AG04450 (cell line): ENCODE measurements at regions of chr13 and their contacts with region 1.

Region 1: DNA sequence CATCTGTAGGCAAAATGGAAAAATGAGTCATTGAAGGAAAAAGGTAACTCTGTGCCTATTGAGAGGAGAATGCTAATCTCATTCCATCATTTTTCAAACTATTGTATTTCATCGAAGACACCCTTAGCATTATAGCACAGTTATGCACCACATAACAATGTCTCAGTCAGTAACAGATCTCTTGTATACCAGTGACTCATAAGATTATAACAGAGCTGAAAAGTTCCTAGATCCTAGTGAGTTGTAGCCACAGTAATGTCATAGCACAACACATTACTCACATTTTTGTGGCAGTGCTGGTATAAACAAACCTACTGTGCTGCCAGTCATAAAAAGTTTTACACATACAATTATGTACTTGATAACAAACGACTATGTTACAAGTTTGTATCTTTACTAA is 1077.6 kb downstream of the DIAPH3 start:
- DNase-seq: peak; percentile 27
- H3K4me3 ChIP-seq: no peak overlapping the region
- H3K27ac ChIP-seq: no peak overlapping the region
- H3K27me3 ChIP-seq: no peaks in the 10 kb centered on the region
- CTCF ChIP-seq: no peak

Region 2: DNA sequence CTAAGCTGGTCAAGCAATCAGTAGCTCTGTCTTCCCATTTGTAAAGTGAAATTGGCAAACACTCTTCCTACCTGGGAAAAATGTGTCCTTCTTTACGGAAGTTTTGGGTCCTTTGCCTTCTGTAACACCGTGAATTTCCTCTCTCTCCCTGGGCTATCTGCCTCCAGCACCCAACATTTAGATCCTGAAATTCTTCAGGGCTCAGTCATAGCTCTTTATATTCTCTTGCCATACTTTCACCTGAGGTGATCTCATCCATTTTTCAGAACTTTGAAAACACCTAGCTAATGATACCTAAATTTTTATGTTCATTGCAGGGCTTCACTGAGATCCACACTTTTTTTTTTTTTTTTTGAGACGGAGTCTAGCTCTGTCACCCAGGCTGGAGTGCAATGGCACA is 35.4 kb after region 1 on chr13:
- CTCF ChIA-PET with region 1: no interaction called
- POLR2A ChIA-PET with region 1: interaction called, 10 read pairs
- DNase-seq: no peak
- H3K4me3 ChIP-seq: no peak overlapping the region
- H3K27ac ChIP-seq: no peak overlapping the region
- H3K27me3 ChIP-seq: no peaks in the 10 kb centered on the region
- CTCF ChIP-seq: no peak